ENCODE measurements at regions of chr14 and their contacts with region 1.

Region 1: DNA sequence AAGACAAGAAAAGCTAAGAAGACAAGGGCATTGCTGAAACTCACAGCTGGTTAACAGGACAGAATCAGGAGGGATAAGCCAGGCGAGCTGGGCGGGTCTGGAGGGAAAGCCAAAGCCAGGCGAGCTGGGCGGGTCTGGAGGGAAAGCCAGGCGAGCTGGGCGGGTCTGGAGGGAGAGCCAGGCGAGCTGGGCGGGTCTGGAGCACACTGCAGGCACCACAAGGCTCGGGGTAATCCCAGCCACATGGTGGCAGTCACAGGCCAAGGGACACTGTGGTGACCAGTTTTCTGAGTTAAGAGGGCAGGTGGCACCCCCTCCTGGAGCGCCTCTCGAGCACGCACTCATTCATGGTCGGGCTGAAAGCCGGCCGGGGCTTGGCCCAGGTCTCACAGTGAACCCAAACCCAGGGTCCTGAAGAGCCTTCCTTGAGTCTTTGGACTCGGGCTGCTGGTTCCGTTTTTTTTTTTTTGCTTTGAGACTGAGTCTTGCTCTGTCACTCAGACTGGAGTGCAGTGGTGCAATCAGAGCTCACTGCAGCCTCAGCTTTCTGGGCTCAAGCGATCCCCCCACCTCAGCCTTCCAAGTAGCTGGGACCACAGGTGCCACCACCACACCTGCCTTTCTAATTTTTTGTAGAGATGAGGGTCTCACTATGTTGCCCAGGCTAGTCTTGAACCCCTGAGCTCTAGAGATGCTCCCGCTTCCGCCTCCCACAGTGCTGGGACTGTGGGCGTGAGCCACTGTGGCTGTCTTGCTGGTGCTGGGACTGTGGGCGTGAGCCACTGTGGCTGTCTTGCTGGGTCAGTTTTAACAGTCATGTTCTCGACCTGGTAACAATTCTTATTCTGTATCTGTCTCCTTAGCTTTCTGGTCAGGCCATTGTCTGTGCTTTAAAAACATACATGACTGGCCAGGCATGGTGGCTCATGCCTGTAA is 40.2 kb downstream of the HSP90AA1 start:
- DNase-seq: peak; percentile 42
- CTCF ChIP-seq: peak; percentile 26

Region 2: DNA sequence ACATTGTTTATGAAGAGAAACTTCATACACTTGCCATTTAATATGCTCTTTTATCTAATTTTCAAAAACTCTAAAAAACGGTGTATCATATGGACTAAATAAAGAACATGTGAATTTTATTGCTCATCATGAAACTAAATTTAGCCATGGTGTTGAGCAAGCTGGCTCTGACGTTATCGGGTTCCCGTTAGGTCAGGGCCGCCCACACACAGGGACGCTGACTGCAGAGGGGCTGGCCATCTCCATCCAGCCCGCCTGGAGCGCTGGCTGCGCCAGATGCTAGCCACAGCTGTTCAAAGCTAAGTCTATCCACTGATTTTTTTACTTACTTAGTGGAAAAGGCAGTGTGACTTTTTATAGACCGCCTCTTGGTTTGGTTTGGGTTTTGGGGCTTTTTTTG is 118.8 kb before region 1 on chr14:
- CTCF ChIA-PET with region 1: no interaction called
- POLR2A ChIA-PET with region 1: no interaction called
- DNase-seq: no peak
- CTCF ChIP-seq: no peak

Region 3: GRCh38 chr14:102071283-102071998 is 24.8 kb after region 1 on chr14:
- CTCF ChIA-PET with region 1: no interaction called
- POLR2A ChIA-PET with region 1: interaction called, 10 read pairs
- DNase-seq: no peak
- CTCF ChIP-seq: no peak

Region 4: DNA sequence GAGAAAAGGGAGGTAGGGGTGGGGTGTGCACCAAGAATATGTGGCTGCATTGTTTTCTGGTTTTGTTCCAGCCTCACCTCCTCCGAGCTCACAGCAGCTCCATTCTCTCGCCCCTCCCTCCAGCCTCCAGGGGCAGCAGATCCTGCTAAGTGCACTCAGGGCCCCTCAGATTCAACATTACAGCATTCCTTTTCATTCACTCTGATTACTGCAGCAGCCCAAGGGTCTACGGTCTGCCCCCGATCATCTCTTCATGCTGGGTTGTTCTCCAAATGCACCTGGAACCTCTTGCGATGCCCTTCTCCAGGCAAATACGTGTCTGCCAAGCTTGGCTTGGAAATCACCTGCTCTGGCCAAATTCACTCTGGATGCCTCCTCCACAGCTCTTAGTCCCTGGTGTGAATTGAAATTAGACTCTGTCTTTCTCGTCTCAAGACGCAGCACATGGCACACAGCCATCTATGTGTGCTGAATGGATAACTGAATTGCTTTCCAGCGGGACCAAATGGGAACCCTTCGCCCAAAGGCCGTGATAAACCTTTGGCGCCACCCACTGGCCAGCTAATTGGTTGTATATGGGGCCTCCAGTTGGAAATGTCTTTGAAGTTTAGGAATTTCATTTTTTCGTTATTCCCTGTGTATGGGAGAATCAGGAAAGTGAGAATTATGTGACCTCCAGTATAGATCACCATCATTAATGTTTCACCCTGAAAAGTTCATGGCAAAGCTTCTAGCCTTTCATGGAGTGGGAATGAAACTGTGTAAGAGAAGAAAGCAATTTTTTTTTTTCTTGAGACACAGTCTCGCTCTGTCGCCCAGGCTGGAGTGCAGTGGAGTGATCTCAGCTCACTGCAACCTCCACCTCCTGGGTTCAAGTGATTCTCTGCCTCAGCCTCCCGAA is 49.9 kb after region 1 on chr14:
- CTCF ChIA-PET with region 1: interaction called, 12 read pairs
- POLR2A ChIA-PET with region 1: no interaction called
- DNase-seq: peak; percentile 63
- CTCF ChIP-seq: peak; percentile 80